ENCODE measurements at regions of chr11 and their contacts with region 1.

Region 1: DNA sequence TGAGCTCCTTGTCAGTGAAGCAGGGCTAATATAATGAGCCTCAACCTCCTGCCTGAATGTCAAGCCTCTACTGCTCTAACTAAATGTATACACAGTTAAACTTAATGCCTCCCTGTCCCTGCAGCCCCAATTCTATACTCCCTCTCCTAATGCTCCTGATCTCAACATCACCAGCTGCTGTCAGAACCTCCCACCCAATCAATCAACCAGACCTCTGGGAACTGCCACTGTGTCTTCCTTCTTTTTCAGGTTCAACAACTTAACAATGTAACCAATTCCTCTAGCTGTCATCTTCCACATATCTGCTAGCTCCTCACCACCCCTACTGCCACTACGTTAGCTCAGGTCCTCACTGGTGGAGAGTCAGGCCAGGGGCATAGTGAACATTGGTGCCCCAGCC is 339.8 kb upstream of the NARS2 start:
- DNase-seq: no peak

Region 2: GRCh38 chr11:78630561-78631303 is 283.8 kb before region 1 on chr11:
- intact Hi-C with region 1: loop called (anchors 5 kb)
- DNase-seq: no peak

Measured in cardiac septum (tissue), 1 donor.